ENCODE measurements at regions of chr12 and their contacts with region 1.

Region 1: GRCh38 chr12:50606675-50607375 is 102.0 kb downstream of the DIP2B start:
- DNase-seq: no peak
- ATAC-seq: peak; percentile 33
- H3K4me3 Mint-ChIP-seq: no peak overlapping the region
- H3K27ac Mint-ChIP-seq: no peak overlapping the region
- H3K4me1 Mint-ChIP-seq: peaks cover 11% of the 10 kb centered on the region
- H3K27me3 Mint-ChIP-seq: no peaks in the 10 kb centered on the region

Region 2: GRCh38 chr12:50637870-50638481 is 31.2 kb after region 1 on chr12:
- CTCF ChIA-PET with region 1: interaction called, 14 read pairs
- POLR2A ChIA-PET with region 1: no interaction called
- intact Hi-C with region 1: no loop called
- DNase-seq: no peak
- ATAC-seq: peak; percentile 42
- H3K4me3 Mint-ChIP-seq: no peak overlapping the region
- H3K27ac Mint-ChIP-seq: peak overlapping the region; percentile 49
- H3K4me1 Mint-ChIP-seq: peaks cover 44% of the 10 kb centered on the region
- H3K27me3 Mint-ChIP-seq: no peaks in the 10 kb centered on the region

Region 3: GRCh38 chr12:50708631-50709030 is 101.8 kb after region 1 on chr12:
- CTCF ChIA-PET with region 1: no interaction called
- POLR2A ChIA-PET with region 1: no interaction called
- intact Hi-C with region 1: no loop called
- DNase-seq: no peak
- ATAC-seq: no peak
- H3K4me3 Mint-ChIP-seq: no peak overlapping the region
- H3K27ac Mint-ChIP-seq: no peak overlapping the region
- H3K4me1 Mint-ChIP-seq: no peaks in the 10 kb centered on the region
- H3K27me3 Mint-ChIP-seq: no peaks in the 10 kb centered on the region

Measured in activated CD4-positive, alpha-beta T cell treated with anti-CD3 and anti-CD28 coated beads for 36 hours (primary cell).